HEK293T (cell line): ENCODE measurements at regions of chr7 and their contacts with region 1.

Region 1: GRCh38 chr7:98777051-98777450 is 92.8 kb downstream of the TMEM130 start:
- DNase-seq: no peak

Region 2: DNA sequence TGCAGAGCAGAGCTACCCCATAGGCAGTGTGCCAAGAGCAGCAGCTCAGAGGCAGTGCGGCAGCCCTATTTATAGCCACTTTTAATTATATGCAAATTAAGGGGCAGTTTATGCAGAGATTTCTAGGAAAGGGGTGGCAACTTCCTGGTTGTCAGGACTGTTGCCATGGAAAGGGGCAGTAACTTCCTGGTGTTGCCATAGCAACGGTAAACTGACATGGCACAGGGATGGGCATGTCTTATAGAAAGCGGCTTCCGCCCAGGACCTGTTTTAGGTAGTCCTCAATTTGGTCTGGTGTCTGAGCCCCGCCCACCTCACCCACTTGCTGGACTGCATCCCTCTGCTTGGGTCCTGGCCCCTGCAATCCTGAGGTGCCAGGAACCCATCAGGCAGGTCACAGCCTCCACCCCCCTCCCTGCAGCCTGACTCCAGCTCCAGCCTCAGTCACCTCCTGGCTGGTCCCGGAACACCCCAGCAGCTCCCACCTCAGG is 23.0 kb before region 1 on chr7:
- CTCF ChIA-PET with region 1: no interaction called
- POLR2A ChIA-PET with region 1: no interaction called
- DNase-seq: no peak

Region 3: DNA sequence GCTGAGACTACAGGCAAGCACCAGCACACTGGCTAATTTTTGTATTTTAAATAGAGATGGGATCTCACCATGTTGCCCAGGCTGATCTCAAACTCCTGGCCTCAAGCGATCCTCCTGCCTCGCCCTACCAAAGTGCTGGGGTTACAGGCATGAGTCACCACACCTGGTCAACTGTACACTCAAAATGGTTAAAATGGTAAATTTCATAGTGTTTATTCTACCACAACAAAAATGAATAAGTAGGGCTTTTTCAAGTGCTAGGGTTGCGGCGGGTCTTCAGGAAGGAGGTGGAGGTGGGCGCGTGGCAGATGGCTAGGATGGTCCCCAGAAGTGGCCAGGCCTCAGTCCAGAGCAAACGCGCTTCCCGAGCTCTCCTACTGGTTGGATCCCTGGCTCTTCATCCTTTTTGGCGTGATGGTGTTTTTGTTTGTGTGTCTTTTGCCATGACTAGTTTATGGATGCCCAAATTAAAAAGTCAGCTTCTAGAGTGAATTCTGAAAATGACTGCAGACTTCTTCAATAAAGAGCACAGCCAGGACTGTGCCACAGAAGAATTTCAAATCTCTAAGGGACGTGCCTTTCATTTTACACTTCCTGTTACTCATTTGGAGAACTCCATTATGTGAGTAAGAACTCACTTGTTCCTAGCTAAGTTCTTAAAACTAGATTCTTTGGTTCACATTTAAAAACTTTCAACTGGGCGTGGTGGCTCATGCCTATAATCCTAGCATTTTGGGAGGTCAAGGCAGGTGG is 18.9 kb after region 1 on chr7:
- CTCF ChIA-PET with region 1: interaction called, 10 read pairs
- POLR2A ChIA-PET with region 1: no interaction called
- DNase-seq: no peak